B cell (primary cell): ENCODE measurements at regions of chr2 and their contacts with region 1.

Region 1: GRCh38 chr2:42360890-42361727 is at the start of gene COX7A2L:
- DNase-seq: peak; percentile 98
- ATAC-seq: peak; percentile 96
- H3K4me3 ChIP-seq: peak within 1 kb of the TSS; percentile 82 to 93 (median 87)
- H3K4me3 Mint-ChIP-seq: peak within 1 kb of the TSS; percentile 94
- H3K27ac ChIP-seq: peak within 1 kb of the TSS; percentile 92 to 93
- H3K27ac Mint-ChIP-seq: peak within 1 kb of the TSS; percentile 99
- H3K4me1 ChIP-seq: peaks cover 21 to 26% of the 10 kb centered on the region in 2 donors
- H3K4me1 Mint-ChIP-seq: peaks cover 40% of the 10 kb centered on the region
- H3K27me3 ChIP-seq: no peaks in the 10 kb centered on the region
- H3K27me3 Mint-ChIP-seq: peaks cover 11% of the 10 kb centered on the region
- CTCF ChIP-seq: peak; percentile 9
- total RNA-seq, gene COX7A2L: 66.7 and 68.1 TPM in 2 replicates

Region 2: GRCh38 chr2:41840702-41841551 is 520.2 kb before region 1 on chr2:
- CTCF ChIA-PET with region 1: no interaction called
- POLR2A ChIA-PET with region 1: no interaction called
- intact Hi-C with region 1: loop called (anchors 1 kb)
- DNase-seq: peak; percentile 97
- ATAC-seq: peak; percentile 99
- H3K4me3 ChIP-seq: peak overlapping the region; percentile 64 to 90 (median 85)
- H3K4me3 Mint-ChIP-seq: peak overlapping the region; percentile 97
- H3K27ac ChIP-seq: peak overlapping the region; percentile 63 to 72
- H3K27ac Mint-ChIP-seq: peak overlapping the region; percentile 88
- H3K4me1 ChIP-seq: peaks cover 10 to 15% of the 10 kb centered on the region in 2 donors
- H3K4me1 Mint-ChIP-seq: peaks cover 11% of the 10 kb centered on the region
- H3K27me3 ChIP-seq: peaks cover 0 to 20% (median 13%) of the 10 kb centered on the region in 4 experiments
- H3K27me3 Mint-ChIP-seq: peaks cover 42% of the 10 kb centered on the region
- CTCF ChIP-seq: peak; percentile 94

Region 3: GRCh38 chr2:41955316-41956043 is 405.6 kb before region 1 on chr2:
- CTCF ChIA-PET with region 1: no interaction called
- POLR2A ChIA-PET with region 1: no interaction called
- intact Hi-C with region 1: no loop called
- DNase-seq: peak; percentile 63
- ATAC-seq: peak; percentile 59
- H3K4me3 ChIP-seq: no peak overlapping the region
- H3K4me3 Mint-ChIP-seq: peak overlapping the region; percentile 63
- H3K27ac ChIP-seq: no peak overlapping the region
- H3K27ac Mint-ChIP-seq: peak overlapping the region; percentile 23
- H3K4me1 ChIP-seq: peaks cover 31 to 37% of the 10 kb centered on the region in 2 donors
- H3K4me1 Mint-ChIP-seq: peaks cover 32% of the 10 kb centered on the region
- H3K27me3 ChIP-seq: no peaks in the 10 kb centered on the region
- H3K27me3 Mint-ChIP-seq: peaks cover 2% of the 10 kb centered on the region
- CTCF ChIP-seq: no peak

Region 4: GRCh38 chr2:42169100-42169873 is 191.8 kb before region 1 on chr2 and contains the start of gene EML4:
- CTCF ChIA-PET with region 1: no interaction called
- POLR2A ChIA-PET with region 1: no interaction called
- intact Hi-C with region 1: loop called (anchors 2 kb)
- DNase-seq: peak; percentile 96
- ATAC-seq: peak; percentile 89
- H3K4me3 ChIP-seq: peak within 1 kb of the TSS; percentile 77 to 98 (median 88)
- H3K4me3 Mint-ChIP-seq: no peak within 1 kb of the TSS
- H3K27ac ChIP-seq: peak within 1 kb of the TSS; percentile 88 to 91
- H3K27ac Mint-ChIP-seq: no peak within 1 kb of the TSS
- H3K4me1 ChIP-seq: peaks cover 38 to 40% of the 10 kb centered on the region in 2 donors
- H3K4me1 Mint-ChIP-seq: peaks cover 28% of the 10 kb centered on the region
- H3K27me3 ChIP-seq: no peaks in the 10 kb centered on the region
- H3K27me3 Mint-ChIP-seq: no peaks in the 10 kb centered on the region
- CTCF ChIP-seq: no peak
- total RNA-seq, gene EML4: 134 and 138 TPM in 2 replicates

Region 5: GRCh38 chr2:42503291-42503690 is 142.2 kb after region 1 on chr2:
- CTCF ChIA-PET with region 1: no interaction called
- POLR2A ChIA-PET with region 1: no interaction called
- intact Hi-C with region 1: no loop called
- DNase-seq: no peak
- ATAC-seq: no peak
- H3K4me3 ChIP-seq: no peak overlapping the region
- H3K4me3 Mint-ChIP-seq: no peak overlapping the region
- H3K27ac ChIP-seq: no peak overlapping the region
- H3K27ac Mint-ChIP-seq: peak overlapping the region; percentile 26
- H3K4me1 ChIP-seq: no peaks in the 10 kb centered on the region
- H3K4me1 Mint-ChIP-seq: no peaks in the 10 kb centered on the region
- H3K27me3 ChIP-seq: no peaks in the 10 kb centered on the region
- H3K27me3 Mint-ChIP-seq: peaks cover 4% of the 10 kb centered on the region
- CTCF ChIP-seq: no peak

Region 6: DNA sequence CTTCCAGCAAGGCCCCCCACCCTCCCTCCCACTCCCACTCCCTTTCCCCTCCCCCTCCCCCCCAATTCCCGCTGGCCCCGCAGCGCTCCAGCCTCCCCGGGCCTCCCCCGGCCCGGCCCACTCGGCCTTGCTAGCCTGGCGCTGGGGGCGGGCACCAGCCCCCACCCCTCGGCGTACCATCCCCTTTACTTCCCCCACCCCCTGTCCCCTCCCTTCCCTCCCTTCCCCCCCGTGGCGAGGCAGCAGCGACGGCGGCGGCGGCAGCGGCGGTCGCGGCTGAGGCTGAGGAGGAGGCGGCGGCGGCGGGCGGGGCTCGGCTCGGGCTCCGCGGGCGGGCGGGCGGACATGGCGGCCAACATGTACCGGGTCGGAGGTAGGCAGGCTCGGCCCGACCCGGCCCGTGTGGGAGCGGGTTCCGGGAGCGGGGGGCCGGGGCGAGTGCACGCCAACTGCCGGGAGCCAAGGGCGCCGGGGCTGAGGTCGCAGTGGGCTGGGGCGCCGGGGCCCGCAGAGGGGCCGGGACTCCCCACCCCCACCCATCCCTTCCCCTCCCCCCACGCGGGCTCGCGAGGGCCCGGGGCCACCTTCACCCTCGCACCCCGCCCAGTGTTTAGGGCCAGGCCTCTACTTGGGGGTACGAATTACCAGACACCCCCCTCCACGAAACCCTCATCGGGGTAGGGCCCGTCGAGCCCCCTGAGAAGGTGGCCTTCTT is 207.4 kb after region 1 on chr2 and contains the start of gene MTA3:
- CTCF ChIA-PET with region 1: no interaction called
- POLR2A ChIA-PET with region 1: no interaction called
- intact Hi-C with region 1: loop called (anchors 1 kb)
- DNase-seq: peak; percentile 74
- ATAC-seq: peak; percentile 67
- H3K4me3 ChIP-seq: peak within 1 kb of the TSS; percentile 26 to 80 (median 70)
- H3K4me3 Mint-ChIP-seq: peak within 1 kb of the TSS; percentile 96
- H3K27ac ChIP-seq: peak within 1 kb of the TSS; percentile 18 to 67
- H3K27ac Mint-ChIP-seq: peak within 1 kb of the TSS; percentile 90
- H3K4me1 ChIP-seq: peaks cover 21 to 26% of the 10 kb centered on the region in 2 donors
- H3K4me1 Mint-ChIP-seq: peaks cover 31% of the 10 kb centered on the region
- H3K27me3 ChIP-seq: no peaks in the 10 kb centered on the region
- H3K27me3 Mint-ChIP-seq: no peaks in the 10 kb centered on the region
- CTCF ChIP-seq: no peak
- total RNA-seq, gene MTA3: 33.2 and 40.1 TPM in 2 replicates

Region 7: DNA sequence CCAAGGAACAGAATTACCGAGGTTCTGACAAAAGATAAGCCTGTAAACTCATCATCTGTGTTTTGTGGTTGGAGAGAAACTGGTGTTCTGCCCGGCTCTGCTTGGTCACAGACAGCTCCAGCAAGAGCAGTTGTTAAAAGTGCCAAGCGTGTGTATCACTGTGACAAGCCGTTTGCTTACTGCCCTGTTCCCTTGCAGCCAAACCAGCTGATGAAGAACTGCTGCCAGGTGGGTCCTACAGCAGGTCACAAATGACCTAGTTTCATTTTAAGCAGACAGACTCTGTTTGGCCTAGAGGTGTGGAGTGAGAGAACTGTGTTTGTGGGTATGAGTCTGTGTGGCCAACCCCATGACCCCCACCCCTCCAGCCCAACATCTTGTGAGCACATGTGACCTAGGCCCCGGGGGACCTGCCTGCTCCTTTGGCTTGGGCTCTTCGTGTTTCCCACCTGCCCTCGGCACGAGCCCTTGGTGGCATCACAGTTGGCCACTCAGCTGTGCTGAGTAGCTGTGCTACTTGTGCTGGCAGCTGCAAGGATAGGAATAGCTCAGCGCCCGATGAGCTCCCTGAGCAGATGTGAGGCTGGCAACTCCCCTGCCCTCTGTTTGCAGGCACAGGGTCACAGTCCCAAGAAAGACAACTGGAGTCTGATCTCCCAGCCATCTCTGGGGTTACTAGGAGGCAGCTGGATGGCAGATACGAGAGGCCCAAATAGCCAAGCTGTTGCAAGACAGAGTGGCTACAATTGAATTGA is 393.1 kb after region 1 on chr2:
- CTCF ChIA-PET with region 1: no interaction called
- POLR2A ChIA-PET with region 1: no interaction called
- intact Hi-C with region 1: loop called (anchors 5 kb)
- DNase-seq: peak; percentile 85
- ATAC-seq: peak; percentile 81
- H3K4me3 ChIP-seq: peak overlapping the region in 2 of 5 experiments; percentile 19 to 38
- H3K4me3 Mint-ChIP-seq: peak overlapping the region; percentile 78
- H3K27ac ChIP-seq: peak overlapping the region; percentile 37 to 50
- H3K27ac Mint-ChIP-seq: peak overlapping the region; percentile 89
- H3K4me1 ChIP-seq: peaks cover 46 to 47% of the 10 kb centered on the region in 2 donors
- H3K4me1 Mint-ChIP-seq: peaks cover 47% of the 10 kb centered on the region
- H3K27me3 ChIP-seq: no peaks in the 10 kb centered on the region
- H3K27me3 Mint-ChIP-seq: no peaks in the 10 kb centered on the region
- CTCF ChIP-seq: no peak

Region 8: GRCh38 chr2:43773876-43774613 is 1412.9 kb after region 1 on chr2 and contains the start of gene DYNC2LI1:
- CTCF ChIA-PET with region 1: no interaction called
- POLR2A ChIA-PET with region 1: no interaction called
- intact Hi-C with region 1: loop called (anchors 2 kb)
- DNase-seq: peak; percentile 83
- ATAC-seq: peak; percentile 99
- H3K4me3 ChIP-seq: peak within 1 kb of the TSS; percentile 76 to 89 (median 82)
- H3K4me3 Mint-ChIP-seq: peak within 1 kb of the TSS; percentile 98
- H3K27ac ChIP-seq: peak within 1 kb of the TSS in 1 of 2 donors; percentile 69
- H3K27ac Mint-ChIP-seq: peak within 1 kb of the TSS; percentile 82
- H3K4me1 ChIP-seq: peaks cover 0 to 11% of the 10 kb centered on the region in 2 donors
- H3K4me1 Mint-ChIP-seq: peaks cover 13% of the 10 kb centered on the region
- H3K27me3 ChIP-seq: no peaks in the 10 kb centered on the region
- H3K27me3 Mint-ChIP-seq: peaks cover 16% of the 10 kb centered on the region
- CTCF ChIP-seq: no peak
- total RNA-seq, gene DYNC2LI1: 11.4 and 12.7 TPM in 2 replicates